ENCODE measurements at regions of chr7 and their contacts with region 1.

Region 1: DNA sequence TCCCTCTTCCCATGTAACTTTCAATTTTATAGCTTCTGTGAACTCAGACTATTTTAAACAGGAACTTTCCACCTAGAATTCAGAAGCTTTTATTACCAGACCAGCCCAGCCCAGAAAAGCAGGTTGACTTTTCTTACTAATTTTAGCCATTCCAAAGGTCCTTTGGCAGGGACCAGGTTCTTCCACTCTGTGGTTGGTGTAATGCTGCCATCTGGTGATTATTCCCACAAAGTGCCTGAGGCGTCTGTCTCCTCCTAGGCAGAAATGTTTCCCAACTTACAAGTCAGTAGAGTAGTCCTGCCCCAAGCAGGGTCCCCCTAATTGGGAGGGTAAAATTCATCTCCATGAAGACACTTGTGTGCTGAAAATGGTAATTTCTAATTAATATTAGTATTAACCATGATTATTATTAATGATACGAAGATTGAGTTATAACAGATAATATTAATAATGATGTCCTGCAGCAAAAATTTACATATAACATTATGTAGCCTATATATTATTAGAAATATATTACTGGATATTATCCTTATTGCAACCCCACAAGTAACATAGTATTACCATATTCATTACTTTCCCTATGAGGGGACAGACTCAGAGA is 53.0 kb upstream of the PPP1R17 start:
- DNase-seq: no peak
- ATAC-seq: peak; percentile 79 to 82
- H3K4me3 ChIP-seq: no peak overlapping the region
- H3K27ac ChIP-seq: no peak overlapping the region
- H3K4me1 ChIP-seq: no peaks in the 10 kb centered on the region
- H3K27me3 ChIP-seq: no peaks in the 10 kb centered on the region
- CTCF ChIP-seq: peak; percentile 62

Region 2: DNA sequence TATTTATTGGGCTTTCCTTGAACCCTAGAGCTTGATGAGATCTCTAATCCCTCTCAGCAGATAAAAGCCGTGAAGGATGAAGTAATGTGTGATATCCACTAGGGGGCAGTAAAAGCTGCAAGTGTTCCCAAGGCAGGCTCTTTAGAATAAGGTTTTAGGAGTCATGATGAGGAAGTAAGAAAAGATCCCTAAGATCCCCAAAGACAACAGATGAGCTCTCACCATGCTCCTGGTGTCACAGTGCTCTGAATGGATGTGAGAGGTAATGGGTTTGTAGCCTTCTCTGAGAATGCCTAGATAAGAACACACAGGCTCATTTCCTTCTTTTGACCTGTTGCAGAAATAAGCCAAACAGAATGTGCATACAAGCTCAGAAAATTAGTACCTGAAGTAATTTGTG is 190.5 kb before region 1 on chr7:
- intact Hi-C with region 1: loop called (anchors 5 kb)
- DNase-seq: no peak
- ATAC-seq: peak; percentile 78 to 82
- H3K4me3 ChIP-seq: no peak overlapping the region
- H3K27ac ChIP-seq: no peak overlapping the region
- H3K4me1 ChIP-seq: no peaks in the 10 kb centered on the region
- H3K27me3 ChIP-seq: no peaks in the 10 kb centered on the region
- CTCF ChIP-seq: peak; percentile 75

Region 3: GRCh38 chr7:31729198-31729781 is 95.3 kb after region 1 on chr7:
- intact Hi-C with region 1: no loop called
- DNase-seq: no peak
- ATAC-seq: no peak
- H3K4me3 ChIP-seq: no peak overlapping the region
- H3K27ac ChIP-seq: no peak overlapping the region
- H3K4me1 ChIP-seq: no peaks in the 10 kb centered on the region
- H3K27me3 ChIP-seq: no peaks in the 10 kb centered on the region
- CTCF ChIP-seq: no peak

Region 4: DNA sequence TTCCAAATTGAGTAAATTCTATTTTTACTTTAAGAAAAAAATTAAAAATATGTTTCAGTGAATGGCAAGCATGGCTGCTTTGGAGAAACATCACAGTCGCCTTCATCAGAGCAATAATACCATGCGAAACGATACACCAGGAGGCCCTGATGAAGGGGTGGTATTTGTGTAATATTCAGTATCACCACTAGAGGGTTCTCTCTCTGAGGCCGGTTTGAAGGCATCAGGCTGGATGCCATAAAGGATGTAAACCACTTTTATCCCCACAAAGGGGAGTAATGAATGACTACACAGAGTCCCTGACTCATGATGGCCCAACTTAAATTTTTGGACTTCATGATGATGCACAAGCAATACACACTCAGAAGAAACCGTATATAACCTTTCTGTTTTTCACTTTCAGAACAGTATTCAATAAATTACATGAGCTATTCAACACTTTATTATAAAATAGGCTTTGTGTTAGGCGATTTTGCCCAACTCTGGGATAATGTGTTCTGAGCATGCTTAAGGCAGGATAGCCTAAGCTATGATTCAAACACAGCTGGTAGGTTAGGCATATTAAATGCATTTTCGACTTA is 148.5 kb after region 1 on chr7:
- intact Hi-C with region 1: no loop called
- DNase-seq: no peak
- ATAC-seq: peak; percentile 66 to 74
- H3K4me3 ChIP-seq: no peak overlapping the region
- H3K27ac ChIP-seq: no peak overlapping the region
- H3K4me1 ChIP-seq: no peaks in the 10 kb centered on the region
- H3K27me3 ChIP-seq: no peaks in the 10 kb centered on the region
- CTCF ChIP-seq: peak; percentile 74

Measured in lower lobe of right lung (tissue), 2 donors.